Aorta (tissue), 5 donors: ENCODE measurements at regions of chr7 and their contacts with region 1.

Region 1: DNA sequence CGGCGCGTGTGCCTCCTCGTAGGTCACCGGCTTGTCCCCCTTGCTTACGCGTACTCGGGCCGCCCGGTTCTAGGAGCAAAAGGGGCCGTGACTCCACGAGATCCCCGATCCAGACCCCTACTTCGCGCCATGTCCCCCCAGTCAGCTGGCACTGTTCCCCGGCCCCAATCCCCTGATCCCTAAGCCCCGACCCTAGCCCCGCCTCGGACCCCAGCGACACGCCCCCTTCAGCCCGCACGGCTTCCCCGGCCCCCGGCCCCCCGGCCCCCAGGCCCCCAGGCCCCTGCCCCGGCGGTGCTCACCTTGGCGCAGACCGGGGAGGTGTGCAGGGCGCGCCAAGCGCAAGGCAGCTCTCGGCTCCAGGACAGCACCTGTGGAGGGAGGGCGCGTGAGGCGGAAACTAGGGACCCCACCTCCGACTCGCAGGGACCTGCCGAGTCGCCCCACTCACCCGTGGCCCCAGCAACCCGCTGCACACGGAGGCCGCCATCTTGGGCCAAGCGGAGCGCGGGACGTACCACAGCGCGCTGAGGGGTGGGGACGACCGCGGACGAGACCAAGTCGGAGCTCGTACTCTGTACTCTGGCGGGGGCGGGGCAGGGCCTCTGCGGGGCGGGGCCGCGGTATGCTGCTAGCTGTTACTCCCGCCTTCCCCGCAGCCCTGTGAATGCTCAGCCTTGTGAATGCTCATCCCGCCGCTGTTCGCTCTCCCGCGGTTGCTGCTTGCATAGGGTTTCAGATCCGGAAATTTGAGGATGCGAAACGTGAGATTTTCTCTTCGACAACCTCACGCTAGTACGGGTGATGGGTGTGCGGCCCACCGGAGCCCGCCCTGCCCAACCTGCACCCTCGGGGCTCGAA is at the start of gene MRPS24:
- DNase-seq: peak; percentile 96 to 98
- ATAC-seq: peak; percentile 98
- H3K4me3 ChIP-seq: peak within 1 kb of the TSS; percentile 87 to 89
- H3K27ac ChIP-seq: peak within 1 kb of the TSS; percentile 76 to 88
- H3K4me1 ChIP-seq: no peaks in the 10 kb centered on the region
- H3K27me3 ChIP-seq: no peaks in the 10 kb centered on the region
- total RNA-seq, gene MRPS24: 53.6 to 55.4 TPM

Region 2: GRCh38 chr7:43904533-43905208 is 35.4 kb after region 1 on chr7:
- intact Hi-C with region 1: loop called in 1 of 2 experiments (anchors 5 kb)
- DNase-seq: no peak
- ATAC-seq: no peak
- H3K4me3 ChIP-seq: peak overlapping the region in 1 of 2 donors; percentile 96
- H3K27ac ChIP-seq: no peak overlapping the region
- H3K4me1 ChIP-seq: no peaks in the 10 kb centered on the region
- H3K27me3 ChIP-seq: no peaks in the 10 kb centered on the region

Region 3: GRCh38 chr7:43914795-43915194 is 45.6 kb after region 1 on chr7:
- intact Hi-C with region 1: no loop called
- DNase-seq: no peak
- ATAC-seq: no peak
- H3K4me3 ChIP-seq: no peak overlapping the region
- H3K27ac ChIP-seq: no peak overlapping the region
- H3K4me1 ChIP-seq: no peaks in the 10 kb centered on the region
- H3K27me3 ChIP-seq: no peaks in the 10 kb centered on the region

Region 4: DNA sequence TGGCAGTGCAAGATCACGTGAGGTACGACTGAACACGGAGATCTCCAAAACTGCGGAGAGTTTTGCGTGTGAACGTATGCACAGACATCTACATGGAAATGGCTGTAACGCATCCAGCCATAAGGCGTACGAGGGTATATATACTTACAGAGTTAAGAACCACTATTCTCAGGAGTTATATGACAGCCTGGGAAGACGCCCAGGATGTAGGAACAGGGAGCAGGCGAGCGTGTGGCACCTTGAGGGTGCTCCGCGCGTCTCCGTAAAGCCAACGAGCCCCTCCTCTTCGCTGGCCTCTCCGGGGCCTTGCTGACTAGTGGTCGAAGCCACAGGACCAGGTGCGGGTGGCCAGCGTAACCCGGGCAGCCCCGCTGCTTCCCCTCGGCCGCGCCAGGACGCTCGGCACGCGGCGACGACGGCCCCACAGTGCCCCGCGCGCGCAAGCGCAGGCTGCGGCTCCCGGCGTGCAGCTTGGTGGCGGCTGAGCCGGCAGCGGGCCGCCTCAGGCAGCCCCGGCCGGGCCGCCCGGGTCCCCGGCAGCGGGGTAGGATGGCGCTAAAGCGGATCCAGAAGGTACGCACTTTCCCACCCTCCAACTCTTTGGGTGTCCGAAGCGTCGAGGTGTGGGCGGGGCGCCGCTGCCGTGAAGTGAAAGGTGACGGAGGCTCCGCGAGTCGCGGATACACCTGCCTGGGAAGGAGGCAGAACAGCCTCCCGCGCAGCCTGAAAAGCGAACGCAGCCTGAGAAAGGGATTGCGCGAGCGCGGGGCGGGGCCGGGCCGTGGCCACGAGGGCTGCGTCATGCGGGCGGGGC is 57.0 kb after region 1 on chr7 and contains the start of gene UBE2D4:
- intact Hi-C with region 1: loop called (anchors 2 to 5 kb)
- DNase-seq: peak; percentile 89 to 96
- ATAC-seq: peak; percentile 95
- H3K4me3 ChIP-seq: peak within 1 kb of the TSS; percentile 45 to 69
- H3K27ac ChIP-seq: peak within 1 kb of the TSS; percentile 53 to 89
- H3K4me1 ChIP-seq: no peaks in the 10 kb centered on the region
- H3K27me3 ChIP-seq: no peaks in the 10 kb centered on the region
- total RNA-seq, gene UBE2D4: 21.6 to 21.8 TPM